Dendritic cell treated with granulocyte-macrophage colony-stimulating factor and Interleukin-4, amounts not matched to agents 40 ng/mL and 50 ng/mL, for 4 days (primary cell): ENCODE measurements at regions of chr20 and their contacts with region 1.

Region 1: DNA sequence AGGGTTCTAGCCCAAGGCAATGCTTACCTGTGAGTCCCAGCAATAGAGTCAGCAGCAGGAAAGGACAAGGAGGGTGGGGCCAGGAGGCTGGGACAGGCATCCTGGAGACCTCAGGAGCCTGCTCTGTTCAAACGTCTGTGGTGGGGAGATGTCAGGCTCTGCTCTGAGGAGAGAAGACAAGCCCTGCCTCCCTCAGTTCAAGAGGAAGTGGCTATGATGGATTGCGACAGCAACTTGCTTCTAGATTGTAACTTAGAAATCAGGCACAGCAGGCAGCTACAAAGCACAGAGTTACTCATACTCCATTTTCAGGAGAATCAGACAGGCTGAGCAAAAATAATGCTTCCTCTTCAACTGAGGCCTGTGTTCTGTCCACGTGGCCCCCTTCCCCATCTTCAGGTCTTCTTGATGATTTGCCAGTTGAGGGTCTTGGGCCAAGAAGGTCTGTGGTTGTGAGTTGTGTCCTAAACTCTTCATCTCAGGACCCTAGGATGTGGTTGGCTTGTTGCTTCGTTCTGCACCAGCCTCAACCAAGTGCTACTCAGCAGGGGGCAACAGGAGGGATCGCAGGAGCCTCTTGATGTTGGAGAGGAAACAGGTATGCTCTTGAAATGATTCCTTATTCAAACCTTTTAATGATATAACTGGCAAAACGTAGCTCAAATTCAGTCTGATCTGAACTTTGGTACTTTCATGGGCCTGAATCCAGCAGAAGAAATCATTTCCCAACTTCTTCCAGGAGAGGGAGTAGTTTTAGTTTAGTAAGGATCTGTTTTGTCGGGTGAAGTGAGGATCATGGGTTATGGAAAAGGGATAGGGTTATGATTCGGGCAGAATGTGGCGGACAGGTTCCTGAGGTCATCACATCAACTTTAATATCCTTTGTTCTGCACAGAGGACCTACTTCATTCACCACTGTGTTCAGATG is 31.0 kb downstream of the SIRPB1 start:
- H3K4me3 Mint-ChIP-seq: peak overlapping the region; percentile 67
- H3K27ac Mint-ChIP-seq: peak overlapping the region; percentile 96
- H3K4me1 Mint-ChIP-seq: peaks cover 45% of the 10 kb centered on the region
- H3K27me3 Mint-ChIP-seq: no peaks in the 10 kb centered on the region

Region 2: GRCh38 chr20:1702328-1702727 is 113.5 kb after region 1 on chr20:
- intact Hi-C with region 1: loop called (anchors 10 kb)
- H3K4me3 Mint-ChIP-seq: no peak overlapping the region
- H3K27ac Mint-ChIP-seq: peak overlapping the region; percentile 41
- H3K4me1 Mint-ChIP-seq: peaks cover 58% of the 10 kb centered on the region
- H3K27me3 Mint-ChIP-seq: peaks cover 9% of the 10 kb centered on the region

Region 3: GRCh38 chr20:1734269-1734858 is 145.6 kb after region 1 on chr20:
- intact Hi-C with region 1: loop called (anchors 10 kb)
- H3K4me3 Mint-ChIP-seq: no peak overlapping the region
- H3K27ac Mint-ChIP-seq: peak overlapping the region; percentile 24
- H3K4me1 Mint-ChIP-seq: peaks cover 15% of the 10 kb centered on the region
- H3K27me3 Mint-ChIP-seq: peaks cover 2% of the 10 kb centered on the region